HCT116 (cell line): ENCODE measurements at regions of chr18 and their contacts with region 1.

Region 1: DNA sequence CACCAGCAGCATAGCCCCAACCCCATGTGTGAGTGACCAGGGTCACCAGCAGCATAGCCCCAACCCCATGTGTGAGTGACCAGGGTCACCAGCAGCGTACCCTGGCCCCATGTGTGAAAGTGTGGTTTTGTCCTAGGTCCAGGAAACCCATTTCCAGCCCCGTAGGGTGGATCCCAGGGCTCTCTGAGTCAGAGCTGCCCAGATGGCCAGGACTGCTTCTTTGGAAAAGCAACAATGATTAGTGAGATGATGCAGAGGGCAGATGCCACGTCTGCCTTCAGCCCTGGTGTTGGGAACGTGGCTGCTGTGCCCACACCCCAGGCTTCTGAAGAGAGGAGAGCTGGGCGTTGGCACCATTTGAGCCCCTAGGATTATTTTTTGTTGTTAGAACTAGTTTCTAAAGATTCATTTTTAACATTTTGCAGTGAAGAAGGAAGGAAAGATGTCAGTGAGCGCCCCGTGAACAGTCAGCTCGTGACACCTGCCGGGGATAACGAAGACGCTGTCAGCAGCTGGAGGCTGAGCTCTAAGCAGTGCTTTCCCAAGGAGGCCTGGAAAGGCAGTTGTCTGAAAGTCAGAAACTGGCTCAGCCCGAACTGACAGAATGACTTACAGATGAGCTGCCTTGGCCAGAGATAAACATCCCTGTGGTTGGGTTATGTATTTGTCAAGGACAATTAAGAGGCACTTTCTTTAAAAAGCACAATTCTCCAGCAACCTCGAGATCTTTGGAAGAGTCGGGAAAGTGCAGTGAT is 32.1 kb upstream of the KCNG2 start:
- DNase-seq: no peak
- ATAC-seq: no peak
- H3K4me3 ChIP-seq: no peak overlapping the region
- H3K27ac ChIP-seq: no peak overlapping the region
- H3K4me1 ChIP-seq: no peaks in the 10 kb centered on the region
- H3K27me3 ChIP-seq: peaks cover 6% of the 10 kb centered on the region; the same call in 1 of the 2 replicates
- CTCF ChIP-seq: no peak
- POLR2A ChIP-seq: no peak
- RAD21 ChIP-seq: no peak

Region 2: GRCh38 chr18:79644006-79644665 is 121.5 kb before region 1 on chr18:
- CTCF ChIA-PET with region 1: no interaction called
- POLR2A ChIA-PET with region 1: no interaction called
- RAD21 ChIA-PET with region 1: no interaction called
- intact Hi-C with region 1: no loop called
- DNase-seq: peak; percentile 88
- ATAC-seq: peak; percentile 99
- H3K4me3 ChIP-seq: no peak overlapping the region
- H3K27ac ChIP-seq: no peak overlapping the region
- H3K4me1 ChIP-seq: peaks cover 0 to 5% of the 10 kb centered on the region in 2 experiments; a peak in 1 of 4 replicates
- H3K27me3 ChIP-seq: no peaks in the 10 kb centered on the region
- CTCF ChIP-seq: peak; percentile 88 to 95 (median 90)
- POLR2A ChIP-seq: no peak
- RAD21 ChIP-seq: peak; percentile 99

Region 3: GRCh38 chr18:79819968-79820351 is 54.3 kb after region 1 on chr18:
- CTCF ChIA-PET with region 1: no interaction called
- POLR2A ChIA-PET with region 1: no interaction called
- RAD21 ChIA-PET with region 1: no interaction called
- intact Hi-C with region 1: loop called (anchors 10 kb)
- DNase-seq: no peak
- ATAC-seq: no peak
- H3K4me3 ChIP-seq: no peak overlapping the region
- H3K27ac ChIP-seq: no peak overlapping the region
- H3K4me1 ChIP-seq: peaks cover 0 to 5% of the 10 kb centered on the region in 2 experiments; a peak in 1 of 4 replicates
- H3K27me3 ChIP-seq: peaks cover 6% of the 10 kb centered on the region; the same call in 1 of the 2 replicates
- CTCF ChIP-seq: no peak
- POLR2A ChIP-seq: no peak
- RAD21 ChIP-seq: no peak

Region 4: GRCh38 chr18:80147418-80148325 is 382.0 kb after region 1 on chr18:
- CTCF ChIA-PET with region 1: no interaction called
- POLR2A ChIA-PET with region 1: no interaction called
- RAD21 ChIA-PET with region 1: no interaction called
- intact Hi-C with region 1: no loop called
- DNase-seq: no peak
- ATAC-seq: peak; percentile 47; the same call in 1 of the 2 replicates
- H3K4me3 ChIP-seq: no peak overlapping the region
- H3K27ac ChIP-seq: no peak overlapping the region
- H3K4me1 ChIP-seq: no peaks in the 10 kb centered on the region
- H3K27me3 ChIP-seq: no peaks in the 10 kb centered on the region
- CTCF ChIP-seq: no peak
- POLR2A ChIP-seq: no peak
- RAD21 ChIP-seq: no peak